AG04449 (cell line): ENCODE measurements at regions of chr10 and their contacts with region 1.

Region 1: GRCh38 chr10:72223743-72224101 is 7.6 kb upstream of the ASCC1 start:
- DNase-seq: no peak
- H3K4me3 ChIP-seq: no peak overlapping the region
- CTCF ChIP-seq: no peak

Region 2: GRCh38 chr10:72088015-72088888 is 135.5 kb before region 1 on chr10 and contains the start of gene SPOCK2:
- CTCF ChIA-PET with region 1: no interaction called
- POLR2A ChIA-PET with region 1: no interaction called
- DNase-seq: no peak
- H3K4me3 ChIP-seq: peak within 1 kb of the TSS; percentile 23
- CTCF ChIP-seq: no peak

Region 3: DNA sequence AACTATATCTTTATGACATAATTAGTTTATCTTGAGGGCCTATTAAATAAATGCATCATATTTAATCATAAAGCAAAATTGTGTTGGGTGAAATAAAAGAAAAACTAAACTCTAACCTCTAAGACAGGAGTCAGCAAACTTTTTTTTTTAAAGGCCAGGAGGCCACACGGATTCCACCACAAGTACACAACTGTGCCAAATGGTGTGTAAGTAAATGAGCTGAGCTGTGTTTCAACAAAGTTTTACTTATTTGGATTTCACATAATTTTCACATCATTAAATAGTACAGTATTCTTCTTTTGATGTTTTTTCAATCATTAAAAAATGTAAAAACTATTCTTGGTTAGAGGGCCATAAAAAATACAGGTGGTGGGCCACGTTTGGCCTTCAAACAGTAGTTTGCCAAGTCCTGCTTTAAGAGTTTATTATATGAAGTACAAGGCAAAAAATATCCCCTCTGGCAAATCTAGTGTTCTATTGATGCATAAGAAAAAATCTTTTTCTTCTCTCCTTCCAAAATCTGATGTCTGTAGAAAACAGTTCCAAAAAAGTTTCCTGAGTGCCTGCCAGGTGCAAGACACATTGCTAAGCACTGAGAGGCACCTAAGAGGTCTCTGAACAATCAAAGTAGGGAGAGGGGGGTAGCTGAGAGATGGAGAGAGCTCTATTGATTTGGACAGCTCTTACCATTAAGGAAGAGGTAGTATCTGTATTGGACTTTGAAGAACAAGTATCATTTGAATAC is 108.8 kb before region 1 on chr10:
- CTCF ChIA-PET with region 1: interaction called, 11 read pairs
- POLR2A ChIA-PET with region 1: no interaction called
- DNase-seq: no peak
- H3K4me3 ChIP-seq: no peak overlapping the region
- CTCF ChIP-seq: no peak

Region 4: GRCh38 chr10:72265508-72265907 is 41.8 kb after region 1 on chr10:
- CTCF ChIA-PET with region 1: no interaction called
- POLR2A ChIA-PET with region 1: no interaction called
- DNase-seq: no peak
- H3K4me3 ChIP-seq: no peak overlapping the region
- CTCF ChIP-seq: no peak

Region 5: DNA sequence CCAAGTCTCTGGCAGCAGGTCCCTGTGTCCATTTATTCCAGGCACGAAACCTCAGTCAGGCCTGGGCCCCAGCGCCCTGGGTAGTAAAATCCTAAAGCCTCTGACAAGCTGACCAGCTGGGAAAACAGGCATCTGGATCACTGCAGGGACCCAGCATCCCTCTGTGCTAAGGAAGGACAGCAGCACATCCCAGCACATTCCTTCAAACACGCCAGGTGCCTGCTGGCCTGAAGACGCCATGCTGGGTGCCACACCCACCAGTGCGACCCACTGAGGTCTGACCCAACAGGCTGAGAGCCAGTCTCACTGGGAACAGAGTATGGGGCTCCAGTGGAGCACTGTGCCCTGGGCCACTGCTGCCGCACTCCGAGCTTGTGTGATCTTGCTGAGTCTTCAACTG is 124.6 kb after region 1 on chr10:
- CTCF ChIA-PET with region 1: no interaction called
- POLR2A ChIA-PET with region 1: no interaction called
- DNase-seq: no peak
- H3K4me3 ChIP-seq: no peak overlapping the region
- CTCF ChIP-seq: no peak